GM10248 (cell line): ENCODE measurements at regions of chr4 and their contacts with region 1.

Region 1: GRCh38 chr4:122602277-122603142 is 18.4 kb downstream of the IL21 start:
- DNase-seq: peak; percentile 20
- CTCF ChIP-seq: peak; percentile 48

Region 2: DNA sequence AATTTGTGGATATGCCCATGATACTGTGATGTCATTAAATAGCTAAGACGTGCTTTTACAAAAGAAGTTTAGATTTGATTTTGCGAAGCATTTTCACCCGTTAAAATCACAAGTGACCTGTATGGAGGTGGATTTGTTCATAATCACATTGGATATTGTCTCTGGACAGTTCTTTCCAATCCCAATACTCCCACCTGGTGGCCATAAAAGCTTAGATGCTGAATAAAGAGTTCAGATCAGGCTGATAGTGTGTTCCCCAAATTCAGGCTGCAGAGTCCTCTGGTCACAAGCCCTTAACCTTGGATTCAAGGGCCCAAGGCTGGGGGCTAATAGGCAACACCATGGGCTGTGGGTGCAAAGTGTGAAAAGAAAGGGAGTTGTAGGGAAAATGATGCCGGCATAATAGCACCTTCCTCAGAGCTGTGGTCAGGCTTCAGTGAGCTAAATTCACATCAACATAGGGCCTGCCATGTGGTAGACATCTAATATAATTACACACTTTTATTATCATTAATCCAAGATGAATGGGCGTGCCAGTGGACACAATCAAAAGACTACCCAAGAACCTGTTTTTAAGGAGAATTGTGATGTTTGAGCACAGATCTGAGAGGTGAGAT is 865.7 kb before region 1 on chr4:
- CTCF ChIA-PET with region 1: no interaction called
- POLR2A ChIA-PET with region 1: no interaction called
- DNase-seq: peak; percentile 26
- CTCF ChIP-seq: peak; percentile 9

Region 3: GRCh38 chr4:122930862-122931261 is 328.4 kb after region 1 on chr4:
- CTCF ChIA-PET with region 1: interaction called, 13 read pairs
- POLR2A ChIA-PET with region 1: no interaction called
- DNase-seq: no peak
- CTCF ChIP-seq: peak; percentile 38